HCT116 (cell line): ENCODE measurements at regions of chr6 and their contacts with region 1.

Region 1: GRCh38 chr6:139369568-139370282 is 4.7 kb downstream of the CITED2 start:
- DNase-seq: no peak
- ATAC-seq: no peak
- H3K4me3 ChIP-seq: no peak overlapping the region
- H3K27ac ChIP-seq: no peak overlapping the region
- H3K4me1 ChIP-seq: peaks cover 9 to 16% of the 10 kb centered on the region in 2 experiments; a peak in 3 of 4 replicates
- H3K27me3 ChIP-seq: no peaks in the 10 kb centered on the region
- CTCF ChIP-seq: peak; percentile 49 to 73 (median 67)
- POLR2A ChIP-seq: no peak
- RAD21 ChIP-seq: peak; percentile 92

Region 2: DNA sequence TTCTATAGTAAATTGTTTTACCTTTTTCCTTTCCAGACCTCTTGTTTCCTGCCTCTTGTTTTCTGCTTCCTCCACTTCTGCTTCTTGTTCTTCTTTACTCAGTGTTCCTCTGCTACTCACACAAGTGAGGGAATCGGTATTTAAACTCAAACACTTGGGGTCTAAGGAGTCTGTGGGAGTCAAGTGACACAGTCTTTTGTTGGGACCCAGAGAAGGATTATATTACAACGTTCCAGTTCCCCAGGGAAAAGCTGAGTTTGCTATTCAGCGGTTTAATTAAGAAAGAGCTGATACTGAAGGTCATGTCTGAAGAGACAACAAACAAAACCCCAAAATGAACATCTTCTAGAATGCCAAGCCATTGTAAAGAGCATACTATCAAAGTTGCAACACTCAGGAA is 112.6 kb after region 1 on chr6:
- CTCF ChIA-PET with region 1: no interaction called
- POLR2A ChIA-PET with region 1: no interaction called
- RAD21 ChIA-PET with region 1: no interaction called
- intact Hi-C with region 1: no loop called
- DNase-seq: no peak
- ATAC-seq: no peak
- H3K4me3 ChIP-seq: no peak overlapping the region
- H3K27ac ChIP-seq: no peak overlapping the region
- H3K4me1 ChIP-seq: no peaks in the 10 kb centered on the region
- H3K27me3 ChIP-seq: no peaks in the 10 kb centered on the region
- CTCF ChIP-seq: no peak
- POLR2A ChIP-seq: no peak
- RAD21 ChIP-seq: no peak

Region 3: GRCh38 chr6:140441256-140441655 is 1071.5 kb after region 1 on chr6:
- CTCF ChIA-PET with region 1: interaction called, 10 read pairs
- POLR2A ChIA-PET with region 1: interaction called, 6 read pairs
- RAD21 ChIA-PET with region 1: interaction called in 1 of 2 experiments, 3 read pairs
- intact Hi-C with region 1: loop called (anchors 1 kb)
- DNase-seq: no peak
- ATAC-seq: peak; percentile 81
- H3K4me3 ChIP-seq: no peak overlapping the region
- H3K27ac ChIP-seq: no peak overlapping the region
- H3K4me1 ChIP-seq: no peaks in the 10 kb centered on the region
- H3K27me3 ChIP-seq: no peaks in the 10 kb centered on the region
- CTCF ChIP-seq: peak; percentile 37 to 59 (median 47); a peak in 4 of 6 replicates
- POLR2A ChIP-seq: no peak
- RAD21 ChIP-seq: peak; percentile 86